ENCODE measurements at regions of chr18 and their contacts with region 1.

Region 1: GRCh38 chr18:54261894-54262293 is 7.4 kb upstream of the POLI start:
- DNase-seq: peak; percentile 69
- H3K4me3 Mint-ChIP-seq: peak overlapping the region; percentile 54
- H3K27ac Mint-ChIP-seq: peak overlapping the region; percentile 96
- H3K4me1 Mint-ChIP-seq: peaks cover 42% of the 10 kb centered on the region
- H3K27me3 Mint-ChIP-seq: no peaks in the 10 kb centered on the region

Region 2: GRCh38 chr18:53937037-53937436 is 324.9 kb before region 1 on chr18:
- intact Hi-C with region 1: loop called (anchors 5 kb)
- DNase-seq: peak; percentile 59
- H3K4me3 Mint-ChIP-seq: peak overlapping the region; percentile 5
- H3K27ac Mint-ChIP-seq: no peak overlapping the region
- H3K4me1 Mint-ChIP-seq: peaks cover 11% of the 10 kb centered on the region
- H3K27me3 Mint-ChIP-seq: no peaks in the 10 kb centered on the region

Region 3: DNA sequence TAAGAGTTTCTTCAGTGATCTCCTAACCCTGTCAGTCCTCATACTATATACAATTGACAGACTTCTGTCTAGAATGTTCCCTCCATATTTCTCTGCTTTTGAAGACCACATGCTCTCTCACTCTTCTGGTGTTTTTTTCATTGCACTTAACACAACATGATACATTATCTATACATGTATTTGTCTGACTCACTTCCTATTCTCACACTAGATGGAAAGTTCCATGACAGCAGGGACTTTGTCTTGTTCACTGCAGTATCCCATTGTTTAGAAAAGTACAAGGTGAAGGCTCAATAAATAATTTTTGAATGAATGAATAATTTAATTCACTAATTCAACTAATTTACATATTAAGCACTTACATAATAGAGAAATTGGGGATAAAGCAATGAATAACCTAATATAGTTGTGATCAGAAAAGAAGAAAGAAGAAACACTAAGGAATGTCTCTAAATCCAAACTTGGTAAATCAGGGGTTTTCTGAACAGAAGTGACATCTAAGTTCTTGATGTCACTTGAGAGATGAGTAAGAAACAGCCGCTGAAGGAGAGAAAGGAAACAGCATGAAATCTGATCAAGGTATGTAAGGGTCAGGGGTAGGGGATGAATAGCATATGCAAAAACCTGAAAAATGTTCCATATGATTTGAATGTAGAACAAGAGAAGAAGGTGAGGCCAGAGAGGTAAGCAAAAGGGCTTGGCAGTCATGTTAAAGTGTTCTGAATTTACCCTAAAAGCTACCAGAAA is 79.9 kb before region 1 on chr18:
- intact Hi-C with region 1: loop called (anchors 1 kb)
- DNase-seq: no peak
- H3K4me3 Mint-ChIP-seq: no peak overlapping the region
- H3K27ac Mint-ChIP-seq: no peak overlapping the region
- H3K4me1 Mint-ChIP-seq: peaks cover 10% of the 10 kb centered on the region
- H3K27me3 Mint-ChIP-seq: no peaks in the 10 kb centered on the region

Region 4: DNA sequence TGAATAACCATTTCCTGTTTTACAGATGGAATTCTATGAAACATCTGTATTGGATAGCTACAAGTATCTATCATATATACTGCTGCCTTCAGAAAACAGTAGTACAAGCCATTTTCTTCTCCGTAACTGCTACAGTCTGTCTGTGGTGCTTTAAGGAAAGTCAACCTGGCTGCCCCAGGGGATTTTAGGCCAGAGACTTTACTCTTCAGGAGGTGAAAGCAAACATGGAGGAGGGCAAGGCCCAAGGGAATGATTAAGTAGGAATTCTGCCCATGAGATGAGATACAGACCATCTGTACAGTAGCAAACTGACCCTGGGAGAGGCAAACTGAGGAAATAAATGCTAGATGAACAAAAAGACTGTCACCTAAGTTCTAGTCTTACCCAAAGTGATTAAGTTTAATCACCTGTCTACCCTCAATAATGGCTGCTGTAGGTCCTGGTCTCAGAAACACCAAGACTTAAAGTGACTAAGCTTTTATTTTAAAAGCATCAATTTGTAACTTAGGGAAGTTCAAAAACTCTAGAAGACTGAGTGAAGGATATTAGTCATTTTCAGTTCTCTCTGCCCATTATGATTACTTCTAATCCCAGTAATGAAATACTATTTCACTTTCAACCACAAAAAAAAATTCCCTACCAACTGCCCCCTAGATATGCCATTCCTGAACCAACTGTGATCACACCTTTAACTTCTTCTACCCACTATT is 52.3 kb before region 1 on chr18:
- intact Hi-C with region 1: loop called (anchors 1 kb)
- DNase-seq: no peak
- H3K4me3 Mint-ChIP-seq: peak overlapping the region; percentile 49
- H3K27ac Mint-ChIP-seq: peak overlapping the region; percentile 79
- H3K4me1 Mint-ChIP-seq: peaks cover 50% of the 10 kb centered on the region
- H3K27me3 Mint-ChIP-seq: no peaks in the 10 kb centered on the region

Region 5: GRCh38 chr18:54229421-54230059 is 32.4 kb before region 1 on chr18:
- intact Hi-C with region 1: loop called (anchors 1 kb)
- DNase-seq: no peak
- H3K4me3 Mint-ChIP-seq: peak overlapping the region; percentile 40
- H3K27ac Mint-ChIP-seq: peak overlapping the region; percentile 84
- H3K4me1 Mint-ChIP-seq: peaks cover 10% of the 10 kb centered on the region
- H3K27me3 Mint-ChIP-seq: peaks cover 3% of the 10 kb centered on the region

Region 6: GRCh38 chr18:54240629-54241107 is 21.2 kb before region 1 on chr18:
- intact Hi-C with region 1: no loop called
- DNase-seq: no peak
- H3K4me3 Mint-ChIP-seq: no peak overlapping the region
- H3K27ac Mint-ChIP-seq: no peak overlapping the region
- H3K4me1 Mint-ChIP-seq: no peaks in the 10 kb centered on the region
- H3K27me3 Mint-ChIP-seq: peaks cover 5% of the 10 kb centered on the region

Measured in activated CD4-positive, alpha-beta T cell treated with anti-CD3 and anti-CD28 coated beads, Interleukin-2, amount 10 ng/mL, durations not matched to agents 24 days and 14 days (primary cell).